ENCODE measurements at regions of chrX and their contacts with region 1.

Region 1: GRCh38 chrX:108224727-108225621 is 133.4 kb downstream of the ATG4A start:
- DNase-seq: peak; percentile 4 to 21
- H3K4me3 ChIP-seq: no peak overlapping the region
- H3K4me3 Mint-ChIP-seq: no peak overlapping the region
- H3K27ac Mint-ChIP-seq: no peak overlapping the region
- H3K4me1 ChIP-seq: no peaks in the 10 kb centered on the region
- H3K4me1 Mint-ChIP-seq: peaks cover 5% of the 10 kb centered on the region
- H3K27me3 ChIP-seq: no peaks in the 10 kb centered on the region
- H3K27me3 Mint-ChIP-seq: no peaks in the 10 kb centered on the region
- CTCF ChIP-seq: peak; percentile 34 to 57

Region 2: DNA sequence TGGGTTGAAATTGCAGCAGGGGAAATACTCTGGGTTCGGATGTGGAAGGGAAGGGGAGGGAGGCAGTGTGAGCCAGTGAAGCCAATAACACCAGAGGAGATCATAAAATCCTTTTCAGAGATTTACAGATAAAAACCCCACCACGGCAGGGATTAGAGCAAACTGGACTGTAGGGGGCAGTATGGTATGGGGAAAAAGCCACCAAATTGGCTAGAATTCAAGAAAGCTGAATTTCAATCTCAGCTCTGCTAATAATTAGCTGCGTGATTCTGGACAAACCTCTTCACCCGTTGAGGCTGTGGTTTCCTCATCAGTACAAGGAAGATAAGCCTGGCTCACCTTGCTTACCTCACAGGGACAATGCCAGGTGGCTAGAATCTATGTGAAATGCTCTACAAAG is 25.3 kb before region 1 on chrX:
- CTCF ChIA-PET with region 1: interaction called, 13 read pairs
- POLR2A ChIA-PET with region 1: no interaction called
- intact Hi-C with region 1: no loop called
- DNase-seq: peak; percentile 31 to 51
- H3K4me3 ChIP-seq: no peak overlapping the region
- H3K4me3 Mint-ChIP-seq: no peak overlapping the region
- H3K27ac Mint-ChIP-seq: no peak overlapping the region
- H3K4me1 ChIP-seq: no peaks in the 10 kb centered on the region
- H3K4me1 Mint-ChIP-seq: no peaks in the 10 kb centered on the region
- H3K27me3 ChIP-seq: no peaks in the 10 kb centered on the region
- H3K27me3 Mint-ChIP-seq: no peaks in the 10 kb centered on the region
- CTCF ChIP-seq: peak; percentile 20 to 44

Region 3: GRCh38 chrX:108304210-108304609 is 79.2 kb after region 1 on chrX:
- CTCF ChIA-PET with region 1: interaction called, 5 read pairs
- POLR2A ChIA-PET with region 1: no interaction called
- intact Hi-C with region 1: loop called (anchors 1 kb)
- DNase-seq: peak in 1 of 2 experiments; percentile 16
- H3K4me3 ChIP-seq: no peak overlapping the region
- H3K4me3 Mint-ChIP-seq: no peak overlapping the region
- H3K27ac Mint-ChIP-seq: no peak overlapping the region
- H3K4me1 ChIP-seq: peaks cover 22% of the 10 kb centered on the region
- H3K4me1 Mint-ChIP-seq: peaks cover 4% of the 10 kb centered on the region
- H3K27me3 ChIP-seq: no peaks in the 10 kb centered on the region
- H3K27me3 Mint-ChIP-seq: no peaks in the 10 kb centered on the region
- CTCF ChIP-seq: peak; percentile 37 to 50

Region 4: GRCh38 chrX:108537005-108537404 is 312.0 kb after region 1 on chrX:
- CTCF ChIA-PET with region 1: no interaction called
- POLR2A ChIA-PET with region 1: no interaction called
- intact Hi-C with region 1: loop called (anchors 1 kb)
- DNase-seq: peak in 1 of 2 experiments; percentile 36
- H3K4me3 ChIP-seq: no peak overlapping the region
- H3K4me3 Mint-ChIP-seq: no peak overlapping the region
- H3K27ac Mint-ChIP-seq: no peak overlapping the region
- H3K4me1 ChIP-seq: no peaks in the 10 kb centered on the region
- H3K4me1 Mint-ChIP-seq: peaks cover 10% of the 10 kb centered on the region
- H3K27me3 ChIP-seq: no peaks in the 10 kb centered on the region
- H3K27me3 Mint-ChIP-seq: no peaks in the 10 kb centered on the region
- CTCF ChIP-seq: peak; percentile 53 to 63

Measured in Caco-2 (cell line).